Mammary epithelial cell (primary cell): ENCODE measurements at regions of chr18 and their contacts with region 1.

Region 1: GRCh38 chr18:32018331-32019250 is at the start of gene RNF125:
- DNase-seq: peak; percentile 94
- H3K4me3 ChIP-seq: peak within 1 kb of the TSS; percentile 60 to 77 (median 69)
- H3K27ac ChIP-seq: no peak within 1 kb of the TSS
- H3K4me1 ChIP-seq: peaks cover 12% of the 10 kb centered on the region
- H3K27me3 ChIP-seq: no peaks in the 10 kb centered on the region
- CTCF ChIP-seq: no peak
- total RNA-seq, gene RNF125: 2.3 to 5.6 TPM

Region 2: GRCh38 chr18:31835528-31836133 is 183.0 kb before region 1 on chr18:
- CTCF ChIA-PET with region 1: no interaction called
- dilution Hi-C with region 1: no loop called
- in situ Hi-C with region 1: no loop called
- intact Hi-C with region 1: no loop called
- DNase-seq: peak; percentile 7
- H3K4me3 ChIP-seq: no peak overlapping the region
- H3K27ac ChIP-seq: no peak overlapping the region
- H3K4me1 ChIP-seq: no peaks in the 10 kb centered on the region
- H3K27me3 ChIP-seq: no peaks in the 10 kb centered on the region
- CTCF ChIP-seq: no peak

Region 3: DNA sequence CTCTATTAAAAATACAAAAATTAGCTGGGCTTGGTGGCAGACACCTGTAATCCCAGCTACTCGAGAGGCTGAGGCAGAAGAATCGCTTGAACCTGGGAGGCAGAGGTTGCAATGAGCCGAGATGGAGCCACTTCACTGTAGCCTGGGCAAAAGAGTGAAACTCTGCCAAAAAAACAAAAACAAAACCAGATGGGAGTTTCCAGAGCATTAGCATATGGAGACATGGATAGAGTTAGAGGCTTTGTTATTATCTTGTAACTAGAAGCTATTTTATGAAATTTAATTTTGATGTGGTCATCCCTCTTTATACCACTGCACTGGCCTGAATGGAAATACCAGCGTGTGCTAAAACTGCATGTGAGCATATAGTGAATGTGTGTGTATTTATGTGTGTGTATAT is 134.6 kb before region 1 on chr18:
- CTCF ChIA-PET with region 1: no interaction called
- dilution Hi-C with region 1: no loop called
- in situ Hi-C with region 1: no loop called
- intact Hi-C with region 1: loop called (anchors 2 kb)
- DNase-seq: no peak
- H3K4me3 ChIP-seq: no peak overlapping the region
- H3K27ac ChIP-seq: no peak overlapping the region
- H3K4me1 ChIP-seq: no peaks in the 10 kb centered on the region
- H3K27me3 ChIP-seq: no peaks in the 10 kb centered on the region
- CTCF ChIP-seq: no peak

Region 4: DNA sequence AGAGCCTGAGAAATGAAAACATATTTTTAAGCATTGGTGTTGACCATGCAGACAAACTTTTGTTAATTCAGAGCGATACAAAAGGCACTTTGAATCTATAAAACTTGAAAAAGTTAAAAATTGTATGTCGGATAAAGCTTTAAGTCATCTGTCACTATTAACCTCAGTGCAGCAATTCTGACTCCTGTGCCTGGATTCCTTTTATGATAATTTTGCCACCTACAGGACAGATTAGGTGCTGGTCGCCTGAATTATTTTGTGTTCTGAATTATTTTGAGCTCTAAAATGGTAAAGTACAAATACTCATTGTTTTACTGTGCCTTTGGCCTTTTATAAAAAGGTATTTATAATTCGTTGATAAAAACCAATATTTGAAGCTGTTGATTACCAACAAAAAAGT is 53.7 kb after region 1 on chr18:
- CTCF ChIA-PET with region 1: interaction called, 7 read pairs
- dilution Hi-C with region 1: no loop called
- in situ Hi-C with region 1: no loop called
- intact Hi-C with region 1: loop called (anchors 5 kb)
- DNase-seq: no peak
- H3K4me3 ChIP-seq: no peak overlapping the region
- H3K27ac ChIP-seq: no peak overlapping the region
- H3K4me1 ChIP-seq: no peaks in the 10 kb centered on the region
- H3K27me3 ChIP-seq: no peaks in the 10 kb centered on the region
- CTCF ChIP-seq: peak; percentile 24 to 54

Region 5: GRCh38 chr18:32092422-32093101 is 74.0 kb after region 1 on chr18:
- CTCF ChIA-PET with region 1: no interaction called
- dilution Hi-C with region 1: no loop called
- in situ Hi-C with region 1: no loop called
- intact Hi-C with region 1: loop called (anchors 1 kb)
- DNase-seq: peak; percentile 96
- H3K4me3 ChIP-seq: peak overlapping the region; percentile 91 to 97 (median 92)
- H3K27ac ChIP-seq: peak overlapping the region; percentile 87
- H3K4me1 ChIP-seq: peaks cover 15% of the 10 kb centered on the region
- H3K27me3 ChIP-seq: no peaks in the 10 kb centered on the region
- CTCF ChIP-seq: no peak